ENCODE measurements at regions of chr1 and their contacts with region 1.

Region 1: GRCh38 chr1:205485338-205486228 is 18.9 kb upstream of the CDK18 start:
- DNase-seq: peak; percentile 76
- H3K4me3 Mint-ChIP-seq: no peak overlapping the region
- H3K27ac Mint-ChIP-seq: no peak overlapping the region
- H3K4me1 Mint-ChIP-seq: peaks cover 9% of the 10 kb centered on the region
- H3K27me3 Mint-ChIP-seq: peaks cover 87% of the 10 kb centered on the region

Region 2: DNA sequence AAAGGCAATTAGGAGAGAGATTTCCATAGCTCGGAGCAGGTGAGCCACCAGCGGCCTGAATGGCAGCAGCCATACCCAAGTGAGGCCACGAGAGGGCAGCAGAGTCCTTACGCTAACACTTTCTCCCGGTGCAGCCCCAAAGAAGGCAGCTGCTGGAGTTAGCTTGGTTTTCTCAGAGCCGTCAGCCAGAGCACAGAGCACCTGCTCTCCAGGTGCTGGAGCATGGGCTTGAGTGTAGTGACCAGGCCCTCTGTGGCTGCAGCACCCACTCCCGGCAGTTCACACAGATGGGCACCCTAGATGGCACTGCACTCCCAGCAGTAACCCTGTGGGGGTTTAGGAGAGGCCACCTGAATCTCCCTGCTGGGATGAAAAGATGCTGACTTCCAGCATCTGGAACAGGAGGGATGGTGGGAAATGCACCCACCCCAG is 212.0 kb before region 1 on chr1:
- CTCF ChIA-PET with region 1: interaction called, 10 read pairs
- DNase-seq: peak; percentile 92
- H3K4me3 Mint-ChIP-seq: no peak overlapping the region
- H3K27ac Mint-ChIP-seq: peak overlapping the region; percentile 82
- H3K4me1 Mint-ChIP-seq: peaks cover 38% of the 10 kb centered on the region
- H3K27me3 Mint-ChIP-seq: peaks cover 26% of the 10 kb centered on the region

Region 3: GRCh38 chr1:205335643-205336091 is 149.9 kb before region 1 on chr1:
- CTCF ChIA-PET with region 1: interaction called, 35 read pairs
- DNase-seq: peak; percentile 88
- H3K4me3 Mint-ChIP-seq: no peak overlapping the region
- H3K27ac Mint-ChIP-seq: no peak overlapping the region
- H3K4me1 Mint-ChIP-seq: no peaks in the 10 kb centered on the region
- H3K27me3 Mint-ChIP-seq: peaks cover 92% of the 10 kb centered on the region

Region 4: GRCh38 chr1:205396967-205397616 is 88.5 kb before region 1 on chr1:
- CTCF ChIA-PET with region 1: interaction called, 80 read pairs
- DNase-seq: peak; percentile 27
- H3K4me3 Mint-ChIP-seq: no peak overlapping the region
- H3K27ac Mint-ChIP-seq: no peak overlapping the region
- H3K4me1 Mint-ChIP-seq: no peaks in the 10 kb centered on the region
- H3K27me3 Mint-ChIP-seq: peaks cover 48% of the 10 kb centered on the region

Region 5: GRCh38 chr1:205422993-205423625 is 62.5 kb before region 1 on chr1:
- CTCF ChIA-PET with region 1: interaction called, 23 read pairs
- DNase-seq: no peak
- H3K4me3 Mint-ChIP-seq: no peak overlapping the region
- H3K27ac Mint-ChIP-seq: no peak overlapping the region
- H3K4me1 Mint-ChIP-seq: no peaks in the 10 kb centered on the region
- H3K27me3 Mint-ChIP-seq: peaks cover 47% of the 10 kb centered on the region

Region 6: GRCh38 chr1:205472737-205473441 is 12.7 kb before region 1 on chr1:
- CTCF ChIA-PET with region 1: interaction called, 26 read pairs
- DNase-seq: no peak
- H3K4me3 Mint-ChIP-seq: no peak overlapping the region
- H3K27ac Mint-ChIP-seq: no peak overlapping the region
- H3K4me1 Mint-ChIP-seq: no peaks in the 10 kb centered on the region
- H3K27me3 Mint-ChIP-seq: peaks cover 39% of the 10 kb centered on the region

Region 7: DNA sequence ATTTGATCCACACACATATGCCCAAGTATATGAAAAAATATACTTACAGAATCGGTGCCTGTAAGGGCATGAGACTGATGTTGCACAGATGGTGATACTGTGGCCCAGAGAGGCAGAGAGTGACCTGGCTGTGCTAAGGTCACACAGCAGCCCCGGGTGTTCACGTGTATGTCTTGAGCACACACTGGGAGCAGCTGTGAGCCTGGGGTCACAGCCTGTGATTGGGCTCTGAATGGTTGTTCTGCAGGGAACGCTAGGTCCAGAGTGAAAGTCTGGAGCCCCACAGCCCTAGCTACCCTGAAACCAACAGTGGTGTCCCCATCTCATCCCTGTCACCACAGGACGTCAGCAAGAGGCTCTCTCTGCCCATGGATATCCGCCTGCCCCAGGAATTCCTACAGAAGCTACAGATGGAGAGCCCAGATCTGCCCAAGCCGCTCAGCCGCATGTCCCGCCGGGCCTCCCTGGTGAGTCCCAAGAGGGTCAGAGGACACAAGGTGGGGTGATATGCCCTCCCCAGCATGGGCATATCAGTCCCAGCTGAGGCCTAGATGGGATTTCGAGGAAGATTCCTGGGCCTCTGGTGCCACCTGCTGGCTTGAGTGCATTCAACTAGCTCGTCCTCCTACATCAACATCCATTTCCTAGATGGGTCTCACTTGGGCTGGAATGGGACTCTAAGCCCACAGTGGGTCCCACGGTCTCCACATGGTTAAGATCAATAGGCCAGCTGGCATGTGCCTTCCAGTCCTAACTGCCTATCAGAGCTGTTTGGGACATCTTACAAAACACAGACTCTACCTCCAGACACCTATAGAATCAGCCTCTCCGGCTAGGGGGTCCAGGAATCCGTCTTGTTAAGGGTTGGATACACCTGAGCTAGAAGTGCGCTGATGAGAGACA is 38.6 kb after region 1 on chr1:
- CTCF ChIA-PET with region 1: interaction called, 216 read pairs
- DNase-seq: peak; percentile 83
- H3K4me3 Mint-ChIP-seq: no peak overlapping the region
- H3K27ac Mint-ChIP-seq: no peak overlapping the region
- H3K4me1 Mint-ChIP-seq: no peaks in the 10 kb centered on the region
- H3K27me3 Mint-ChIP-seq: peaks cover 4% of the 10 kb centered on the region

Measured in activated naive CD4-positive, alpha-beta T cell treated with anti-CD3 and anti-CD28 coated beads, Interleukin-2, amount 10 ng/mL, durations not matched to agents 7 days and 5 days (primary cell).